ENCODE measurements at regions of chr18 and their contacts with region 1.

Region 1: GRCh38 chr18:6482198-6482977 is 67.7 kb upstream of the L3MBTL4 start:
- DNase-seq: peak; percentile 38
- ATAC-seq: peak; percentile 100
- H3K4me3 ChIP-seq: peak overlapping the region in 1 of 3 experiments; percentile 37; a peak in 2 of 6 replicates
- H3K27ac ChIP-seq: no peak overlapping the region
- H3K4me1 ChIP-seq: peaks cover 25% of the 10 kb centered on the region
- H3K27me3 ChIP-seq: peaks cover 0 to 12% of the 10 kb centered on the region in 2 experiments; a peak in 1 of 5 replicates
- CTCF ChIP-seq: peak; percentile 98
- EP300 ChIP-seq: no peak
- POLR2A ChIP-seq: no peak
- RAD21 ChIP-seq: peak; percentile 94

Region 2: GRCh38 chr18:5879479-5879882 is 602.9 kb before region 1 on chr18:
- CTCF ChIA-PET with region 1: interaction called, 18 read pairs
- POLR2A ChIA-PET with region 1: no interaction called
- in situ Hi-C with region 1: loop called (anchors 10 kb)
- intact Hi-C with region 1: loop called (anchors 1 kb)
- DNase-seq: peak; percentile 24
- ATAC-seq: no peak
- H3K4me3 ChIP-seq: no peak overlapping the region
- H3K27ac ChIP-seq: no peak overlapping the region
- H3K4me1 ChIP-seq: no peaks in the 10 kb centered on the region
- H3K27me3 ChIP-seq: peaks cover 0 to 6% of the 10 kb centered on the region in 2 experiments; a peak in 2 of 5 replicates
- CTCF ChIP-seq: peak; percentile 69
- EP300 ChIP-seq: no peak
- POLR2A ChIP-seq: no peak
- RAD21 ChIP-seq: peak; percentile 39; the same call in 1 of the 2 replicates

Region 3: GRCh38 chr18:6257950-6258349 is 224.4 kb before region 1 on chr18:
- CTCF ChIA-PET with region 1: no interaction called
- POLR2A ChIA-PET with region 1: no interaction called
- in situ Hi-C with region 1: no loop called
- intact Hi-C with region 1: loop called (anchors 2 kb)
- DNase-seq: peak; percentile 14
- ATAC-seq: peak; percentile 88
- H3K4me3 ChIP-seq: no peak overlapping the region
- H3K27ac ChIP-seq: no peak overlapping the region
- H3K4me1 ChIP-seq: no peaks in the 10 kb centered on the region
- H3K27me3 ChIP-seq: no peaks in the 10 kb centered on the region
- CTCF ChIP-seq: peak; percentile 62
- EP300 ChIP-seq: no peak
- POLR2A ChIP-seq: no peak
- RAD21 ChIP-seq: no peak

Region 4: GRCh38 chr18:6370886-6371635 is 111.3 kb before region 1 on chr18:
- CTCF ChIA-PET with region 1: no interaction called
- POLR2A ChIA-PET with region 1: no interaction called
- in situ Hi-C with region 1: no loop called
- intact Hi-C with region 1: loop called (anchors 5 kb)
- DNase-seq: peak; percentile 86
- ATAC-seq: peak; percentile 74
- H3K4me3 ChIP-seq: peak overlapping the region; percentile 39 to 68 (median 53)
- H3K27ac ChIP-seq: peak overlapping the region; percentile 78
- H3K4me1 ChIP-seq: peaks cover 96% of the 10 kb centered on the region
- H3K27me3 ChIP-seq: no peaks in the 10 kb centered on the region
- CTCF ChIP-seq: peak; percentile 25; the same call in 1 of the 2 replicates
- EP300 ChIP-seq: peak in 1 of 2 experiments; percentile 86; a peak in 2 of 4 replicates
- POLR2A ChIP-seq: no peak
- RAD21 ChIP-seq: no peak

Region 5: GRCh38 chr18:6525604-6526003 is 43.2 kb after region 1 on chr18:
- CTCF ChIA-PET with region 1: no interaction called
- POLR2A ChIA-PET with region 1: no interaction called
- in situ Hi-C with region 1: no loop called
- intact Hi-C with region 1: no loop called
- DNase-seq: no peak
- ATAC-seq: no peak
- H3K4me3 ChIP-seq: no peak overlapping the region
- H3K27ac ChIP-seq: no peak overlapping the region
- H3K4me1 ChIP-seq: no peaks in the 10 kb centered on the region
- H3K27me3 ChIP-seq: no peaks in the 10 kb centered on the region
- CTCF ChIP-seq: no peak
- EP300 ChIP-seq: no peak
- POLR2A ChIP-seq: no peak
- RAD21 ChIP-seq: no peak

Region 6: GRCh38 chr18:6561420-6561861 is 79.1 kb after region 1 on chr18:
- CTCF ChIA-PET with region 1: no interaction called
- POLR2A ChIA-PET with region 1: no interaction called
- in situ Hi-C with region 1: no loop called
- intact Hi-C with region 1: no loop called
- DNase-seq: no peak
- ATAC-seq: no peak
- H3K4me3 ChIP-seq: no peak overlapping the region
- H3K27ac ChIP-seq: no peak overlapping the region
- H3K4me1 ChIP-seq: no peaks in the 10 kb centered on the region
- H3K27me3 ChIP-seq: peaks cover 0 to 10% of the 10 kb centered on the region in 2 experiments; a peak in 4 of 5 replicates
- CTCF ChIP-seq: no peak
- EP300 ChIP-seq: no peak
- POLR2A ChIP-seq: no peak
- RAD21 ChIP-seq: no peak